ENCODE measurements at regions of chr19 and their contacts with region 1.

Region 1: GRCh38 chr19:53103198-53103944 is at the start of gene ZNF160:
- DNase-seq: peak; percentile 99 to 100 (median 99)
- ATAC-seq: peak; percentile 95
- H3K4me3 ChIP-seq: peak within 1 kb of the TSS; percentile 72 to 83
- H3K4me3 Mint-ChIP-seq: peak within 1 kb of the TSS; percentile 92
- H3K27ac ChIP-seq: peak within 1 kb of the TSS; percentile 89 to 90
- H3K27ac Mint-ChIP-seq: peak within 1 kb of the TSS; percentile 97
- H3K4me1 ChIP-seq: peaks cover 14% of the 10 kb centered on the region
- H3K4me1 Mint-ChIP-seq: peaks cover 37% of the 10 kb centered on the region
- H3K27me3 ChIP-seq: no peaks in the 10 kb centered on the region
- H3K27me3 Mint-ChIP-seq: no peaks in the 10 kb centered on the region
- CTCF ChIP-seq: no peak
- total RNA-seq, gene ZNF160: 50.8 to 53.3 TPM

Region 2: GRCh38 chr19:52734893-52735661 is 368.3 kb before region 1 on chr19 and contains the start of gene ZNF611:
- CTCF ChIA-PET with region 1: no interaction called
- POLR2A ChIA-PET with region 1: no interaction called
- intact Hi-C with region 1: loop called in 1 of 2 experiments (anchors 2 kb)
- DNase-seq: peak; percentile 98 to 100 (median 100)
- ATAC-seq: peak; percentile 96
- H3K4me3 ChIP-seq: peak within 1 kb of the TSS; percentile 87 to 92
- H3K4me3 Mint-ChIP-seq: peak within 1 kb of the TSS; percentile 92
- H3K27ac ChIP-seq: peak within 1 kb of the TSS; percentile 88 to 90
- H3K27ac Mint-ChIP-seq: peak within 1 kb of the TSS; percentile 95
- H3K4me1 ChIP-seq: peaks cover 11% of the 10 kb centered on the region
- H3K4me1 Mint-ChIP-seq: peaks cover 30% of the 10 kb centered on the region
- H3K27me3 ChIP-seq: no peaks in the 10 kb centered on the region
- H3K27me3 Mint-ChIP-seq: no peaks in the 10 kb centered on the region
- CTCF ChIP-seq: peak; percentile 61
- total RNA-seq, gene ZNF611: 22.4 to 23.0 TPM

Region 3: GRCh38 chr19:52962394-52963246 is 140.8 kb before region 1 on chr19 and contains the start of gene ZNF816:
- CTCF ChIA-PET with region 1: no interaction called
- POLR2A ChIA-PET with region 1: interaction called, 3 read pairs
- intact Hi-C with region 1: loop called (anchors 1 kb)
- DNase-seq: peak; percentile 98 to 99 (median 99)
- ATAC-seq: peak; percentile 99
- H3K4me3 ChIP-seq: peak within 1 kb of the TSS; percentile 76 to 77
- H3K4me3 Mint-ChIP-seq: peak within 1 kb of the TSS; percentile 94
- H3K27ac ChIP-seq: peak within 1 kb of the TSS; percentile 61 to 67
- H3K27ac Mint-ChIP-seq: peak within 1 kb of the TSS; percentile 95
- H3K4me1 ChIP-seq: peaks cover 9% of the 10 kb centered on the region
- H3K4me1 Mint-ChIP-seq: peaks cover 31% of the 10 kb centered on the region
- H3K27me3 ChIP-seq: no peaks in the 10 kb centered on the region
- H3K27me3 Mint-ChIP-seq: no peaks in the 10 kb centered on the region
- CTCF ChIP-seq: no peak
- total RNA-seq, gene ZNF816: 5.9 to 6.4 TPM

Region 4: GRCh38 chr19:53195265-53195903 is 92.0 kb after region 1 on chr19:
- CTCF ChIA-PET with region 1: interaction called, 3 read pairs
- POLR2A ChIA-PET with region 1: no interaction called
- intact Hi-C with region 1: loop called in 1 of 2 experiments (anchors 1 kb)
- DNase-seq: peak; percentile 48 to 86 (median 75)
- ATAC-seq: peak; percentile 50
- H3K4me3 ChIP-seq: no peak overlapping the region
- H3K4me3 Mint-ChIP-seq: peak overlapping the region; percentile 19
- H3K27ac ChIP-seq: no peak overlapping the region
- H3K27ac Mint-ChIP-seq: peak overlapping the region; percentile 24
- H3K4me1 ChIP-seq: peaks cover 16% of the 10 kb centered on the region
- H3K4me1 Mint-ChIP-seq: peaks cover 48% of the 10 kb centered on the region
- H3K27me3 ChIP-seq: no peaks in the 10 kb centered on the region
- H3K27me3 Mint-ChIP-seq: no peaks in the 10 kb centered on the region
- CTCF ChIP-seq: peak; percentile 90

Region 5: DNA sequence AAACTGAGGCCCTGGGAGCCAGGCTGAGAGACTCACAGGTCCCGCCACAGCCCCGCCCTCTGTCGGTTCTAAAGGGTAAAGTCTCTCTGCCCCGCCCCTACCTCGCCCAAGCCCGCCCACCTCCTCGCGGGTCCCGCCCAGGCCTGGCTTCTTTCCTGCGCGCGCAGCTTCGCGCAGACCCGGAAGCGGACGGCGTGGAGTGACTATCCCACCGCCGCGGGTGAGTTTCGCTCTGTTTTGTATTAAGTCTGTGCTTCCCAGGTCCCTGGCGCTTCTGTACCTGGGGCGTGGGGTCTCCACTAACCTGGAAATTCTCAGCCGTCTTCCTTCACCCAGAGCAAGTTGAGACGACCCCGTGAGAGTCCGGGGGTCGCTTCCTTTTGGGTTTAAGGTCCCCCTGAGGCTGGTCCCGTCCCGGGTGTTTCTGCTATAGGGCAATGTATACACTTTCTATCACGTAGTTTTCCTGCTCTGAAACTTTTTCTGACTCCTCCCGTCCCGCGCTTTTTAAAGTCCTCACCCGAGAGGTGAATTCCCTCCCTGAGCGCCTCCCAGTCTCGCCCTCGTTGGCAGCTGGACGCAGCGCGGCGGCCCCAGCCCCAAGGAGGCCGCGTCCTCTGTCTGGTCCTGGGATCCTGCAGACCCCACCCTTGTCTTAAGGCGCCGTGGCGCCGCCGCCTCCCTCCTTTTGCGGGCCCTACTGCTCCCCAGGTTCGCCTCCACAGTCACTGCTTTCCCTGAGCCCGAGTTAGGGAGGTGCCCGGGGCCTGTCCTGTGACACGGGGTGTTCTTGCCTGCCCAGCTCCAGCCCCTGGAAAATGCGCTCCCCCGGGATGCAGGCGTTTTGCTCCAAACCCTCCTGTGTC is 291.8 kb after region 1 on chr19 and contains the start of gene ZNF765:
- CTCF ChIA-PET with region 1: no interaction called
- POLR2A ChIA-PET with region 1: no interaction called
- intact Hi-C with region 1: loop called in 1 of 2 experiments (anchors 1 kb)
- DNase-seq: peak; percentile 94 to 99 (median 97)
- ATAC-seq: peak; percentile 99
- H3K4me3 ChIP-seq: peak within 1 kb of the TSS; percentile 86 to 97
- H3K4me3 Mint-ChIP-seq: peak within 1 kb of the TSS; percentile 96
- H3K27ac ChIP-seq: peak within 1 kb of the TSS; percentile 78 to 84
- H3K27ac Mint-ChIP-seq: peak within 1 kb of the TSS; percentile 96
- H3K4me1 ChIP-seq: peaks cover 12% of the 10 kb centered on the region
- H3K4me1 Mint-ChIP-seq: peaks cover 36% of the 10 kb centered on the region
- H3K27me3 ChIP-seq: no peaks in the 10 kb centered on the region
- H3K27me3 Mint-ChIP-seq: no peaks in the 10 kb centered on the region
- CTCF ChIP-seq: peak; percentile 53
- total RNA-seq, gene ZNF765: 9.6 to 12.4 TPM

Measured in CD8-positive, alpha-beta T cell (primary cell).